ENCODE measurements at regions of chr9 and their contacts with region 1.

Region 1: DNA sequence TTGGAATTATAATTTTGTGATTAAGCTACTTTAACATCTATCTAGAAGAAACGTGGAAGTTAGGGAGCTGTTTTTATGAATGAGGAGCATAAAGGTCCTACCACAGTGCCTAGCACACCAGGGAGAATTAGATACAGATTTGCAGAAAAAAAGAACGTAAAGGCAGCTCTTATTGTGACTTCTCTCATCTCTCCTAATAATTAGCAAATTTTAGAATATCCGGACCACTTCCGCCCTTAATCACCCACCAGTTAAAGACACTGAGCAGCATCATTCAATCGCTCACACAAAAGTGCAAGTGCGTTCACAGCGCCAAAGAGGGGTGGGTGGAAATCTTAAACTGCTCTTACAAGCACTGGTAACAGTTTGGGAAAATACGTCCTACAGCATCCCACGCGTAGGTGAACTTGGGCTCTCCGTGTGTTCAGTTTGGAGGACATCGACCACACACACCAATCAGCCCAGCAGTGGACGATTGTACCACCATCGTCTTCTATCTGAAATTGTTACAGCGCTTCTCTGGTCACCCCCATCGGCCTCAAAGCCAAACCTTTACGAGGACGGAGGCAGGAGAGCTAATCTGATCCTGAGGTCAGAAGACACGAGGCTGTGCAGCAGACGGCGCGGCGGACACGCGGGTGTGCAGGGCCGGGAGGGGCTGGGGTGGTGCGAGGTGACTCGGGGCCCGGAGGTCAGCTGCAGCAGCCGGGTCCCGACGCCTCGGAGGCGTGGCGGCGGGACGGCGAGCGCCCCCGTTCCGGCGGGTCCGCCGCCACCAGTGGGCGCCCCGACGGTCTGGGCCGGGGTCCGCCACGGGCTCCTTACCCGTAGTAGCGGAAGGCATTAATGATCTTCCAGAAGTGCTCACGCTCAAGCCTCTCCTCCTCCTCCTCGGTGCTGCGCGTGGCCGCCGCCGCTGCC is 646 bp downstream of the CARNMT1 start:
- DNase-seq: peak; percentile 2 to 71 (median 27)
- ATAC-seq: peak; percentile 4
- H3K4me3 ChIP-seq: peak overlapping the region; percentile 86
- H3K4me3 Mint-ChIP-seq: peak overlapping the region; percentile 98
- H3K27ac ChIP-seq: peak overlapping the region; percentile 70 to 85
- H3K27ac Mint-ChIP-seq: peak overlapping the region; percentile 92
- H3K4me1 ChIP-seq: peaks cover 24% of the 10 kb centered on the region
- H3K4me1 Mint-ChIP-seq: peaks cover 56% of the 10 kb centered on the region
- H3K27me3 ChIP-seq: no peaks in the 10 kb centered on the region
- H3K27me3 Mint-ChIP-seq: no peaks in the 10 kb centered on the region
- CTCF ChIP-seq: peak; percentile 30

Region 2: DNA sequence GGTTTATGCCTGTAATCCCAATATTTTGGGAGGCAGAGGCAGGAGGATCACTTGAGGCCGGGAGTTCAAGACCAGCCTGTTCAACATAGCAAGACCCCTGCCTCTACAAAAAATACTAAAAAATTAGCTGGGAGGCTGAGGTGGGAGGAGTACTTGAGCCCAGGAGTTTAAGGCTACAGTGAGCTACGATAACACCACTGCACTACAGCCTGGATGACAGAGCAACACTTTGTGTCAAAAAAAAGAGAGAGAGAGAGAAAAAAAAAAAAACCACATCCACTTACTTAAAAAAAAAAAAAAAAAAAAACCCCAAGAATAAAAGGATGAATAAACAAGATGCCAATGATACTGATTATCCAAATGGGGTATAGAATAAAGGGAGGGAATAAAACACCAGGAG is 13.7 kb before region 1 on chr9:
- CTCF ChIA-PET with region 1: interaction called, 4 read pairs
- POLR2A ChIA-PET with region 1: interaction called, 30 read pairs
- intact Hi-C with region 1: no loop called
- DNase-seq: peak in 2 of 14 experiments; percentile 21 to 24
- ATAC-seq: no peak
- H3K4me3 ChIP-seq: no peak overlapping the region
- H3K4me3 Mint-ChIP-seq: peak overlapping the region; percentile 55
- H3K27ac ChIP-seq: no peak overlapping the region
- H3K27ac Mint-ChIP-seq: peak overlapping the region; percentile 10
- H3K4me1 ChIP-seq: peaks cover 8% of the 10 kb centered on the region
- H3K4me1 Mint-ChIP-seq: peaks cover 44% of the 10 kb centered on the region
- H3K27me3 ChIP-seq: no peaks in the 10 kb centered on the region
- H3K27me3 Mint-ChIP-seq: no peaks in the 10 kb centered on the region
- CTCF ChIP-seq: no peak

Region 3: DNA sequence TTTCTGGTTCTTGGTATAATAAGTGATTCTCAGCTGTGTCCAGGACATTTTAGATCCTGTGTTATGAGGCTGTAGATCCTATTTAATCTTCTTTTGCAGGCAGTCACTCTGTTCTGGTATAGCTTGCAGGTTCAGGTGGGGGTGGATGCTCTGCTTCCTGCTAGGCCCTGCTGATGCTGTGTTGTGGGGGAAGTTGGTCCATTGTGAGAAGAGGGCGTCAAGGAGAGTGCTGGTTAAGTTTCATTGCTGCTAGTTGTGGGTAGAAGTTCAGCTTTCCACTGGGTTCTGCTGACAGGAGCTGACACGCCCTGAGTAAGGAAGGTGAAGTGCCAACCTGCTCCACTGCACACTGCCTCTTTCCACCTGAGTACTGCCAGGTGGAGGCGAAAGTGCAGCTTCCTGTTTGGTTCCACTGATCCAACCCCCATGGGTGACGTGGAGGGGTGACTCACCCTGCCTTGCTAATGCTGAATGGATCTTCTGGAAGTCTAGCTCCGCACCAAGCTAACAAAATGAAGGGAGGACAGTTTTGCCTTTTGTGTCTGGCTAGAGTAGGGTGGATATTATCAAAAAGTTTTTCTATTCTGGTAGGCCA is 44.2 kb after region 1 on chr9:
- CTCF ChIA-PET with region 1: interaction called, 7 read pairs
- POLR2A ChIA-PET with region 1: interaction called, 7 read pairs
- intact Hi-C with region 1: loop called (anchors 2 to 5 kb)
- DNase-seq: peak; percentile 23 to 81 (median 68)
- ATAC-seq: peak; percentile 99
- H3K4me3 ChIP-seq: no peak overlapping the region
- H3K4me3 Mint-ChIP-seq: no peak overlapping the region
- H3K27ac ChIP-seq: peak overlapping the region in 1 of 2 donors; percentile 2
- H3K27ac Mint-ChIP-seq: peak overlapping the region; percentile 72
- H3K4me1 ChIP-seq: peaks cover 9% of the 10 kb centered on the region
- H3K4me1 Mint-ChIP-seq: peaks cover 31% of the 10 kb centered on the region
- H3K27me3 ChIP-seq: no peaks in the 10 kb centered on the region
- H3K27me3 Mint-ChIP-seq: no peaks in the 10 kb centered on the region
- CTCF ChIP-seq: no peak

Region 4: DNA sequence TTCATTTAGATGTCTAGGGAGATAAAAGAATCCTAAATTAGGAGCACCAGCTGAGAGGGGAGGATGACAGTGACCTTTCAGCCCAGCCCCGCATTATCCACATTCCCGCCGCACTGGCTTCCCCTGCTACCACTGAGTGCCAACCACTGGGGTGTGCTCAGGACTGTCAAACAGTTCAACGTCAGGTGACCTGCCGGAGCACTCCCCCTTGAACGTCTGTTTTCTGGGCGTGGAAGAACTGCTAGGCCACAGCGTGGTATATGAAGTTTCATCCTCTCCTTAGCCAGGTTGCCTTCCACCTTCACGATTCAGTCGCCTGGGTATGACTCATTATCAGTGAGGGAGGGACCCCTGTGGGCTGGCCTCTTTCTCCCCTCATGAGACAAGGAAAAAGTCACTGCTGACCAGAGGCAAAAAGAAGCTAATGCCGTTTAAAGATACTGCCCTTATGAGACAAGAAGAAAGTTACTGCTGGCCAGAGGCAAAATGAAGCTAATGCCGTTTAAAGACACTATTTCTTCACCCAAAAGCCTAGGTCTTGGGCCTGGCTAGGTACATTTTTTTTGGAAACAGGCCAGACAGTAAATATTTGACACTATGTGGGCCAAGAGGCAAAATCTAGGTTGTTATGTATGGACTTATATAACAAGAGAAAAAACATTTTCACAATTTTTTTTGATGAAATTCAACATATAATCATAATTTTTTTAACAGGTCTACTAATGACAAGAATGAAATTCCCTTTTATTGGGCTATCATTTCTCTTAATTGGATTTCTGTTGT is 55.9 kb after region 1 on chr9:
- CTCF ChIA-PET with region 1: interaction called, 29 read pairs
- POLR2A ChIA-PET with region 1: interaction called, 173 read pairs
- intact Hi-C with region 1: loop called (anchors 1 to 2 kb)
- DNase-seq: peak in 9 of 14 experiments; percentile 12 to 78 (median 37)
- ATAC-seq: peak; percentile 27
- H3K4me3 ChIP-seq: no peak overlapping the region
- H3K4me3 Mint-ChIP-seq: peak overlapping the region; percentile 71
- H3K27ac ChIP-seq: peak overlapping the region in 1 of 2 donors; percentile 31
- H3K27ac Mint-ChIP-seq: peak overlapping the region; percentile 88
- H3K4me1 ChIP-seq: peaks cover 40% of the 10 kb centered on the region
- H3K4me1 Mint-ChIP-seq: peaks cover 61% of the 10 kb centered on the region
- H3K27me3 ChIP-seq: no peaks in the 10 kb centered on the region
- H3K27me3 Mint-ChIP-seq: no peaks in the 10 kb centered on the region
- CTCF ChIP-seq: no peak

Region 5: GRCh38 chr9:75148561-75148960 is 121.1 kb after region 1 on chr9:
- CTCF ChIA-PET with region 1: no interaction called
- POLR2A ChIA-PET with region 1: interaction called, 9 read pairs
- intact Hi-C with region 1: loop called (anchors 5 to 10 kb)
- DNase-seq: peak in 2 of 14 experiments; percentile 27 to 47
- ATAC-seq: no peak
- H3K4me3 ChIP-seq: no peak overlapping the region
- H3K4me3 Mint-ChIP-seq: peak overlapping the region; percentile 83
- H3K27ac ChIP-seq: peak overlapping the region; percentile 29 to 47
- H3K27ac Mint-ChIP-seq: peak overlapping the region; percentile 92
- H3K4me1 ChIP-seq: peaks cover 55% of the 10 kb centered on the region
- H3K4me1 Mint-ChIP-seq: peaks cover 91% of the 10 kb centered on the region
- H3K27me3 ChIP-seq: no peaks in the 10 kb centered on the region
- H3K27me3 Mint-ChIP-seq: no peaks in the 10 kb centered on the region
- CTCF ChIP-seq: no peak